ENCODE measurements at regions of chr7 and their contacts with region 1.

Region 1: GRCh38 chr7:120110169-120110568 is 162.8 kb upstream of the KCND2 start:
- DNase-seq: peak; percentile 75
- H3K4me3 Mint-ChIP-seq: peak overlapping the region; percentile 27
- H3K27ac Mint-ChIP-seq: peak overlapping the region; percentile 78
- H3K4me1 Mint-ChIP-seq: peaks cover 16% of the 10 kb centered on the region
- H3K27me3 Mint-ChIP-seq: no peaks in the 10 kb centered on the region
- CTCF ChIP-seq: no peak

Region 2: DNA sequence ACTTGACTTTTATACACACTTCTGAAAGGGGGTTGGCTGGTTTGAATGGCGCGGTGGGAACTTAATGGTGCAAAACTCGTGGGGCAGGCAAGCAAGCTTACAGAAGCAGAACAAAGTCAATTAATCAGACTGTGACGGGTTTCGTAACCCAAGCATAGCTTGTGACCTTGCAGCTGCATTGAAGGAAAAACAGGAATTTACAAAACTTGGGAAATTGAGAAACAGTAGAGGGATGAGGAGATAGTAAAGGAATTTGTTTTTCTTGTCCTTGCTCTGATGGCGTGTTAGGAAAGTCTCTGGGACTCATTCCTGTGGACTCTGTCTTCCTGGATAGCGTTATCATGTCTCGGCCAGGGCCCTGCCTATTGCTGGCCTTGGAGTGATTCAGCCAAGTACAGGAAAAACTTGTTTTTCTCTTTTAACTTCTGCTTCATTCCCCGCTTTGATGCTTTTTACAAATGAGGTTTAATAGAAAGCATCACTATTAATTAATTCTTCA is 57.2 kb before region 1 on chr7:
- CTCF ChIA-PET with region 1: no interaction called
- intact Hi-C with region 1: loop called (anchors 5 kb)
- DNase-seq: peak; percentile 40
- H3K4me3 Mint-ChIP-seq: no peak overlapping the region
- H3K27ac Mint-ChIP-seq: peak overlapping the region; percentile 69
- H3K4me1 Mint-ChIP-seq: peaks cover 42% of the 10 kb centered on the region
- H3K27me3 Mint-ChIP-seq: no peaks in the 10 kb centered on the region
- CTCF ChIP-seq: no peak

Region 3: GRCh38 chr7:120097020-120097419 is 13.1 kb before region 1 on chr7:
- CTCF ChIA-PET with region 1: no interaction called
- intact Hi-C with region 1: no loop called
- DNase-seq: no peak
- H3K4me3 Mint-ChIP-seq: no peak overlapping the region
- H3K27ac Mint-ChIP-seq: no peak overlapping the region
- H3K4me1 Mint-ChIP-seq: peaks cover 5% of the 10 kb centered on the region
- H3K27me3 Mint-ChIP-seq: no peaks in the 10 kb centered on the region
- CTCF ChIP-seq: no peak

Region 4: GRCh38 chr7:120131096-120131839 is 21.1 kb after region 1 on chr7:
- CTCF ChIA-PET with region 1: no interaction called
- intact Hi-C with region 1: no loop called
- DNase-seq: no peak
- H3K4me3 Mint-ChIP-seq: no peak overlapping the region
- H3K27ac Mint-ChIP-seq: no peak overlapping the region
- H3K4me1 Mint-ChIP-seq: peaks cover 6% of the 10 kb centered on the region
- H3K27me3 Mint-ChIP-seq: no peaks in the 10 kb centered on the region
- CTCF ChIP-seq: no peak

Region 5: DNA sequence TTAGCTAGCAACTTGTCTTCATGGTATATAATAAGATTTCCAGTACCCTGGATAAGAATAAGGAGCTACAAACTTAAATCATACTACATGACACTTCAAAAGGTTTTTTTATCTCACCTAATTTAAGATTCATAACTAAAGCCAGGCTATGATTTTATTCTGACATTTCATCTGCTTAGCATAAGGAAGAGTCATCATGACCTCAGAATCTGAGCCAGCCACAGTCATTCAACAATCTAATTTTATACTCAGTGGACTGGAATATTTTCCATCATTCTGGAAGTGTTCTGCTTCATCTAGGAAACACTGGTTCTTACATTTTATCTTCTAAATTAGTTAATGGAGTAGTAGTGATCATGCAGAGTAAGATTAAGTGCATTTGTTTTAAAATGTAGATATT is 60.7 kb after region 1 on chr7:
- CTCF ChIA-PET with region 1: no interaction called
- intact Hi-C with region 1: loop called (anchors 1 kb)
- DNase-seq: no peak
- H3K4me3 Mint-ChIP-seq: no peak overlapping the region
- H3K27ac Mint-ChIP-seq: no peak overlapping the region
- H3K4me1 Mint-ChIP-seq: peaks cover 7% of the 10 kb centered on the region
- H3K27me3 Mint-ChIP-seq: no peaks in the 10 kb centered on the region
- CTCF ChIP-seq: no peak

Measured in Calu3 (cell line).